GM10248 (cell line): ENCODE measurements at regions of chr9 and their contacts with region 1.

Region 1: DNA sequence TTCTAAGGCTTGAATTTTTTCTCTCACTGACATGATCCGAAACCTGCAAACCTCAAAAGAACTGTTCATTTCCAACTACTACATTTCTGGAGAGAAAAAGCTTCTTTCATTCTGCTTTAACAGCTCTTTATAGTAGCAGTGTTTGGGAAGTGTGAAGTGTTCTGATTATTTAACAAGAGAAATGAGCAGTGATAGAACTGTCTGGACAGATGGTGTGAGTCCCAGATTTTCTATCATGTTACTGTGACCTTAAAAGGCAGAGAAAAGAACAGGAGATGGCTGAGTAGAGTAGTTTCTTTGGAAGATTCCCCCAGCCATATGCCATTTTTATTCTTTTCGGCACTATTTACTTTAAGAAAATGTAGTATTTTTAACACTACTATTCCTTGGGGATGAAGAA is 41.3 kb upstream of the TAL2 start:
- DNase-seq: no peak
- CTCF ChIP-seq: no peak

Region 2: GRCh38 chr9:105647595-105648349 is 26.8 kb after region 1 on chr9:
- CTCF ChIA-PET with region 1: interaction called, 10 read pairs
- POLR2A ChIA-PET with region 1: no interaction called
- DNase-seq: no peak
- CTCF ChIP-seq: no peak